IMR-90 (cell line): ENCODE measurements at regions of chr1 and their contacts with region 1.

Region 1: GRCh38 chr1:100912019-100912418 is 16.1 kb downstream of the SLC30A7 start:
- DNase-seq: peak; percentile 37
- ATAC-seq: peak; percentile 64
- H3K4me3 ChIP-seq: no peak overlapping the region
- H3K27ac ChIP-seq: no peak overlapping the region
- H3K4me1 ChIP-seq: peaks cover 6% of the 10 kb centered on the region
- H3K27me3 ChIP-seq: no peaks in the 10 kb centered on the region
- CTCF ChIP-seq: no peak
- POLR2A ChIP-seq: no peak
- RAD21 ChIP-seq: no peak

Region 2: DNA sequence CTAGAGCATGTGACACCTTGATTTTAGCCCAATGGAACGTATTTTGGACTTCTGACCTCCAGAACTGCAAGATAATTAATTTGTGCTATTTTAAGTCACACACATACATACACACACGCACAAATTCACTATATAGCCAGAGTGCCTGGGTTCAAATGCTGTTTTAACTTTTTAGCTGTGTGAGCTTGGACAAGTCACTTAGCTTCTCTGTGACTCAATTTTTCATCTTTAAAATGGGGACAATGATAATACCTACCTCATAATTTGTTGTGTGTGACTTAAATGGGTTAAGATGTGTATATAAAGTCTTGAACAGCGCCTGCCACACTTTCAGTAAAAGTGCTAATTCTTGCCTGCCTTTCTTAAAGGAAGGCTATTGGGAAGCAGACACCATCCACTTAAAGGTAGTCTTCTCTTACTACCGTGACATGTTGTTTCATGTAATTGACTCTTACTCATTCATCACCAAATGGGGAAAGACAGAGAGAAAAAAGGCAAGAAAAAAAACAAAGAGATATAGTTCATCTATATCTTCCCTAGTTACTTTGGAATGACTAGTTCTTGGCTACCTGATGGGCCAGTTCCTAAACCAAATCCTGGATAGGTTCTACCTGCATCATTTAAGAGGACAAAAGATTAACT is 40.2 kb after region 1 on chr1:
- CTCF ChIA-PET with region 1: no interaction called
- POLR2A ChIA-PET with region 1: no interaction called
- dilution Hi-C with region 1: no loop called
- in situ Hi-C with region 1: no loop called
- intact Hi-C with region 1: loop called (anchors 1 kb)
- DNase-seq: no peak
- ATAC-seq: no peak
- H3K4me3 ChIP-seq: no peak overlapping the region
- H3K27ac ChIP-seq: no peak overlapping the region
- H3K4me1 ChIP-seq: peaks cover 8% of the 10 kb centered on the region
- H3K27me3 ChIP-seq: no peaks in the 10 kb centered on the region
- CTCF ChIP-seq: no peak
- POLR2A ChIP-seq: no peak
- RAD21 ChIP-seq: no peak